ENCODE measurements at regions of chr7 and their contacts with region 1.

Region 1: DNA sequence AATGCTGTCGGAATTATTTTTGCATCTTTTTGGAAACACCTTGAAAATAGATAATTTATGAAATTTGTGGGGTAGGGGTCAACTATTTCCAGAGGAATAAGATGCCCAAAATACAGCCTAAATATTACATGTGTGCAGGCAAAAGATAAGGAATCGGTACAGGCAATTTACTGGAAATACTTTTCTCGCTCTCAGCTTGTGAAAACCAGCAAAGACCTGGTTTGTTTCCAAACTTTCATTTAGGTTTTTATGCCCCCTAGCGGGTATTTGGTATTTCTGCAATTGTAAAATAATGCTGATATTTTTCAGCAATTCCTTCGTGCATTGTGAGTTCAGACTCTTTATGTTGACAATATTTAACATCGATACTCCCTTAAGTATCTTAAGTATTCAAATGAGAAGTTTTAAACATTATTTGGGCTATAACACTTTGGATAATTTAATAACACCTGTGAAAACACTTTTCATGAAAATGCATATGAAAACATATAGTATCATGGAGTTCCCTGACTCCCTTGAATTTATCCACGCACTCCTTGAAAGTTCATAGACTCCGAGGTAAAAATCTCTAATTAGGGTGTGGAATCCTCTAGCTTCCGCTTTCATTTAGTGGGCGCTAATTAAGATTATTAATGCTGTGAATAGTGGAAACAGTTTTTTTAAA is 132.4 kb downstream of the TSPAN12 start:
- DNase-seq: no peak
- ATAC-seq: peak; percentile 54
- H3K4me3 ChIP-seq: no peak overlapping the region
- H3K27ac ChIP-seq: no peak overlapping the region
- H3K4me1 ChIP-seq: no peaks in the 10 kb centered on the region; the same call in 1 of the 2 replicates
- H3K27me3 ChIP-seq: no peaks in the 10 kb centered on the region
- CTCF ChIP-seq: peak; percentile 54 to 59 (median 55); a peak in 5 of 6 replicates
- EP300 ChIP-seq: no peak
- POLR2A ChIP-seq: no peak
- RAD21 ChIP-seq: peak; percentile 87

Region 2: DNA sequence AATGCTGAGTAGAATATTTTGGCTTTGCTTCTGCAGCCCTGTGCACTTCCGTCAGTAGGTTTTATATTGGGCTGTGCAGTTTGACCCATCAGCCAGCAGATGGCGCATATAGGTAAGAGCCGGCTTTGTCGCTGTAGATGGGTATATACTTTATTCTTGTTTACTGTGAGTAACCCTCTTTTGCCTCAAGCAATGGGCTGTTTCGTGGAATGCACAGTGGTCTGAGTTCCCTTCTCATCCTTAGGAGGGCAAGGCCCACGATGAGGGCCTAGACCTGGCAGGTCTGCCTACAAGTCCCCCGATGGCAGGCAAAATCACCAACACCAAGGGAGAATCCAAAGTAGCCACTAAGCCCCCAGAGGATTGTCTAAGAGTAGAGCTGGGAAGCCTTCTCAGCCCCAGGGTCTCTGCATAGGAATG is 1455.5 kb before region 1 on chr7:
- CTCF ChIA-PET with region 1: interaction called, 3 read pairs
- POLR2A ChIA-PET with region 1: no interaction called
- RAD21 ChIA-PET with region 1: no interaction called
- SMC1A ChIA-PET with region 1: no interaction called
- in situ Hi-C with region 1: loop called (anchors 10 kb)
- intact Hi-C with region 1: loop called (anchors 1 kb)
- DNase-seq: no peak
- ATAC-seq: peak; percentile 98
- H3K4me3 ChIP-seq: no peak overlapping the region
- H3K27ac ChIP-seq: no peak overlapping the region
- H3K4me1 ChIP-seq: no peaks in the 10 kb centered on the region
- H3K27me3 ChIP-seq: no peaks in the 10 kb centered on the region
- CTCF ChIP-seq: peak; percentile 78 to 89 (median 87)
- EP300 ChIP-seq: no peak
- POLR2A ChIP-seq: no peak
- RAD21 ChIP-seq: peak; percentile 74

Region 3: GRCh38 chr7:119935418-119936025 is 790.0 kb before region 1 on chr7:
- CTCF ChIA-PET with region 1: interaction called, 33 read pairs
- POLR2A ChIA-PET with region 1: no interaction called
- RAD21 ChIA-PET with region 1: interaction called, 21 read pairs
- SMC1A ChIA-PET with region 1: interaction called, 11 read pairs
- in situ Hi-C with region 1: loop called (anchors 10 kb)
- intact Hi-C with region 1: loop called (anchors 2 kb)
- DNase-seq: no peak
- ATAC-seq: peak; percentile 85
- H3K4me3 ChIP-seq: no peak overlapping the region
- H3K27ac ChIP-seq: no peak overlapping the region
- H3K4me1 ChIP-seq: no peaks in the 10 kb centered on the region
- H3K27me3 ChIP-seq: peaks cover 0 to 1% of the 10 kb centered on the region in 2 experiments; a peak in 2 of 4 replicates
- CTCF ChIP-seq: peak in 2 of 3 experiments; percentile 31 to 32; a peak in 3 of 6 replicates
- EP300 ChIP-seq: no peak
- POLR2A ChIP-seq: no peak
- RAD21 ChIP-seq: peak; percentile 57

Region 4: DNA sequence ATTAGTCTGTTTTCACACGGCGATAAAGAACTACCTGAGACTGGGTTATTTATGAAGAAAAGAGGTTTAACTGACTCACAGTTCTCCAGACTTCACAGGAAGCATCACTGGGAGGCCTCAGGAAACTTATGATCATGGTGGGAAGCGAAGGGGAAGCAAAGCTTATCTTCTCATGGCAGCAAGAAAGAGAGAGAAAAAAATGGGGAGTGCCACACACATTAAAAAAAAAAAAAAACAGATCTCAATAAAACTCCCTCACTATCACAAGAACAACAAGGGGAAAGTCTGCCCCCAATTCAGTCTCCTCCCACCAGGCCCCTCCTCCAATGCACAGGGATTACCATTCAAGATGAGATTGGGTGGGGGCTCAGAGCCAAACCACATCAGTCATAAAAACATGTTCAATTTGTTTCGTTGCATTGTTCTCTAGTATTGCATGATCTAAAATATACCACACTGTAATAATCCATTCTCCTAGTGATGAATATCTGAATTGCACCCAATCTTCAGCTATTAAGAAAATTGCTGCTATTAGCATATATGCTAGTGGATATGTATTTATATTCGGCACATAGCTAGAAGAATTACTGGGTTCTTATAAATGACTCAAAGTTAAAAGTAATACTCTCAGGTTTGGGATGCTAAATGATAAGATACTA is 781.4 kb before region 1 on chr7:
- CTCF ChIA-PET with region 1: interaction called, 3 read pairs
- POLR2A ChIA-PET with region 1: no interaction called
- RAD21 ChIA-PET with region 1: interaction called, 4 read pairs
- SMC1A ChIA-PET with region 1: no interaction called
- in situ Hi-C with region 1: loop called (anchors 10 kb)
- intact Hi-C with region 1: no loop called
- DNase-seq: no peak
- ATAC-seq: peak; percentile 34; the same call in 2 of the 3 replicates
- H3K4me3 ChIP-seq: no peak overlapping the region
- H3K27ac ChIP-seq: no peak overlapping the region
- H3K4me1 ChIP-seq: no peaks in the 10 kb centered on the region
- H3K27me3 ChIP-seq: no peaks in the 10 kb centered on the region
- CTCF ChIP-seq: no peak
- EP300 ChIP-seq: no peak
- POLR2A ChIP-seq: no peak
- RAD21 ChIP-seq: no peak

Region 5: DNA sequence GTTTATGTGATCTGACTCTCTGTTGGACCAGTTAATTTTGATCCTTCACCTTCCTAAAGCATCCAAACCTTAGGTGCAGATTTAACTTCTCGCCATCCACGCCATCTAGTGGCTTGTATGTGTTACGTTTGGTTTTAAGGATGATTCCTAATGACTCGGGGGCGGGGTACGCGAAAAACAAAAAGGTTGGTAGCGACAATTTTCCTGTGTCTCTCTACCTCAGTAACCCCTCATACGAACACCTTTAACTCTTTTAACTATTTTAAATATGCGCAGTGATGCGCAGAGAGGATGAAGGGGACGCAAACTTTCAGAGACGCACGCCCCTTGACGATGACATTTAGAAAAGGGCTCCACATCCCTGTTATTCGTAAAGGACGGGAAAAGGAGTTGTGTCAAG is 453.2 kb before region 1 on chr7:
- CTCF ChIA-PET with region 1: interaction called, 5 read pairs
- POLR2A ChIA-PET with region 1: no interaction called
- RAD21 ChIA-PET with region 1: interaction called, 3 read pairs
- SMC1A ChIA-PET with region 1: interaction called, 3 read pairs
- in situ Hi-C with region 1: no loop called
- intact Hi-C with region 1: loop called (anchors 5 kb)
- DNase-seq: peak; percentile 27
- ATAC-seq: peak; percentile 63
- H3K4me3 ChIP-seq: peak overlapping the region; percentile 82
- H3K27ac ChIP-seq: peak overlapping the region; percentile 64; the same call in 1 of the 2 replicates
- H3K4me1 ChIP-seq: no peaks in the 10 kb centered on the region
- H3K27me3 ChIP-seq: no peaks in the 10 kb centered on the region
- CTCF ChIP-seq: peak; percentile 71 to 82 (median 75)
- EP300 ChIP-seq: no peak
- POLR2A ChIP-seq: no peak
- RAD21 ChIP-seq: peak; percentile 92

Region 6: GRCh38 chr7:120583899-120584586 is 141.5 kb before region 1 on chr7:
- CTCF ChIA-PET with region 1: no interaction called
- POLR2A ChIA-PET with region 1: no interaction called
- RAD21 ChIA-PET with region 1: no interaction called
- SMC1A ChIA-PET with region 1: no interaction called
- in situ Hi-C with region 1: no loop called
- intact Hi-C with region 1: loop called (anchors 10 kb)
- DNase-seq: no peak
- ATAC-seq: no peak
- H3K4me3 ChIP-seq: no peak overlapping the region
- H3K27ac ChIP-seq: no peak overlapping the region
- H3K4me1 ChIP-seq: no peaks in the 10 kb centered on the region
- H3K27me3 ChIP-seq: no peaks in the 10 kb centered on the region
- CTCF ChIP-seq: no peak
- EP300 ChIP-seq: no peak
- POLR2A ChIP-seq: no peak
- RAD21 ChIP-seq: no peak

Region 7: GRCh38 chr7:120709972-120710320 is 15.6 kb before region 1 on chr7:
- CTCF ChIA-PET with region 1: interaction called, 29 read pairs
- POLR2A ChIA-PET with region 1: interaction called, 6 read pairs
- RAD21 ChIA-PET with region 1: interaction called, 3 read pairs
- SMC1A ChIA-PET with region 1: interaction called, 37 read pairs
- in situ Hi-C with region 1: no loop called
- intact Hi-C with region 1: no loop called
- DNase-seq: no peak
- ATAC-seq: no peak
- H3K4me3 ChIP-seq: no peak overlapping the region
- H3K27ac ChIP-seq: no peak overlapping the region
- H3K4me1 ChIP-seq: no peaks in the 10 kb centered on the region
- H3K27me3 ChIP-seq: no peaks in the 10 kb centered on the region
- CTCF ChIP-seq: no peak
- EP300 ChIP-seq: no peak
- POLR2A ChIP-seq: no peak
- RAD21 ChIP-seq: no peak

Region 8: GRCh38 chr7:121099572-121099971 is 374.1 kb after region 1 on chr7:
- CTCF ChIA-PET with region 1: no interaction called
- POLR2A ChIA-PET with region 1: no interaction called
- RAD21 ChIA-PET with region 1: no interaction called
- SMC1A ChIA-PET with region 1: no interaction called
- in situ Hi-C with region 1: no loop called
- intact Hi-C with region 1: no loop called
- DNase-seq: no peak
- ATAC-seq: 0 out of 3 replicates have a peak, but pooled peaks have one; percentile 41
- H3K4me3 ChIP-seq: no peak overlapping the region
- H3K27ac ChIP-seq: no peak overlapping the region
- H3K4me1 ChIP-seq: no peaks in the 10 kb centered on the region
- H3K27me3 ChIP-seq: peaks cover 0 to 2% of the 10 kb centered on the region in 2 experiments; a peak in 1 of 4 replicates
- CTCF ChIP-seq: peak in 1 of 3 experiments; percentile 2; a peak in 1 of 6 replicates
- EP300 ChIP-seq: no peak
- POLR2A ChIP-seq: no peak
- RAD21 ChIP-seq: no peak

Measured in GM12878 (cell line).